ENCODE measurements at regions of chr17 and their contacts with region 1.

Region 1: DNA sequence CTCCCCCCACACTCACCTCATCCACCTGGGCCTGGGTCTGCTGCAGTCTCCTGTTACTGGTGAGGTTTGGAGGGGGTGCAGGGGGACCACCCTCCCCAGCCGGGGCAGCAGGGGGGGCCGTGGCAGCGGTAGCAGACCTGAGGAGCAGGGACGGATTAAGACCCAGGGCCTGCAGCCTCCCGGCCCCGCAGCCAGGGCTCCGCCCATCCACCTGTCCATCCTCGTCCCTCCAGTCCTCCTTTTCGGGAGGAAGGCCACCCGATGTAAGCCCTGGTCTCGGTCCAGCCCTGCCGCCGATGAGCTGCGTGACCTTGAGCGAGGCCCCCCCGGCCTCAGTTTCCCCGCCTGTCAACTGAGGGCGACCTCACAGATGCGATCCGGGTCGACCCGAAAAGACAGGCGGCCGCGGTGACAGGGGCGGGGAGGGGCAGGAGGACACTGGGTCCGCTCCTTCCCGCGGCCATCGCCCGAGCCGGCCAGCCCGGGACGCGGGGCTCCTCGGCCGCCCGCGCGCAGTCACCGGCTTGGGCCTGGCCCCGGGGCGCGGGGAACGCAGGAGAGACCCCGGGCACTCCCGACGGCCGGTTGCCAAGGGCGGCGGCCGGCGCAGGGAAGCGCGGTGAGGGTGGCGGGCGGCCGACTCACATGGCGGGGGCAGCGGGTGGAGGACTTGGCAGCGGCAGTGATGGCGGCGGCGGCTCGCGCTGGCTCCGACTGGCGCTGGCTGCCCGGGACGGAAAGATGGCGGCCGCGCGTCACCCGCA is at the start of gene VAMP2:
- DNase-seq: peak; percentile 92
- ATAC-seq: peak; percentile 47
- H3K4me3 Mint-ChIP-seq: peak within 1 kb of the TSS; percentile 85
- H3K27ac Mint-ChIP-seq: peak within 1 kb of the TSS; percentile 96
- H3K4me1 Mint-ChIP-seq: peaks cover 57% of the 10 kb centered on the region
- H3K27me3 Mint-ChIP-seq: no peaks in the 10 kb centered on the region
- total RNA-seq, gene VAMP2: 26.7 to 27.8 TPM

Region 2: GRCh38 chr17:7959503-7960253 is 202.7 kb before region 1 on chr17:
- CTCF ChIA-PET with region 1: no interaction called
- POLR2A ChIA-PET with region 1: no interaction called
- intact Hi-C with region 1: no loop called
- DNase-seq: no peak
- ATAC-seq: no peak
- H3K4me3 Mint-ChIP-seq: no peak overlapping the region
- H3K27ac Mint-ChIP-seq: no peak overlapping the region
- H3K4me1 Mint-ChIP-seq: no peaks in the 10 kb centered on the region
- H3K27me3 Mint-ChIP-seq: peaks cover 4% of the 10 kb centered on the region

Region 3: GRCh38 chr17:8268550-8269298 is 106.3 kb after region 1 on chr17:
- CTCF ChIA-PET with region 1: no interaction called
- POLR2A ChIA-PET with region 1: no interaction called
- intact Hi-C with region 1: no loop called
- DNase-seq: no peak
- ATAC-seq: no peak
- H3K4me3 Mint-ChIP-seq: no peak overlapping the region
- H3K27ac Mint-ChIP-seq: no peak overlapping the region
- H3K4me1 Mint-ChIP-seq: no peaks in the 10 kb centered on the region
- H3K27me3 Mint-ChIP-seq: no peaks in the 10 kb centered on the region

Region 4: GRCh38 chr17:9473715-9474114 is 1311.3 kb after region 1 on chr17:
- CTCF ChIA-PET with region 1: no interaction called
- POLR2A ChIA-PET with region 1: interaction called, 14 read pairs
- intact Hi-C with region 1: no loop called
- DNase-seq: no peak
- ATAC-seq: no peak
- H3K4me3 Mint-ChIP-seq: no peak overlapping the region
- H3K27ac Mint-ChIP-seq: peak overlapping the region; percentile 42
- H3K4me1 Mint-ChIP-seq: peaks cover 39% of the 10 kb centered on the region
- H3K27me3 Mint-ChIP-seq: no peaks in the 10 kb centered on the region